A549 (cell line): ENCODE measurements at regions of chr20 and their contacts with region 1.

Region 1: GRCh38 chr20:40689943-40690835 is 1.2 kb upstream of the MAFB start:
- DNase-seq: peak; percentile 73 to 86
- ATAC-seq: peak; percentile 72 to 91
- H3K4me3 ChIP-seq: peak overlapping the region; percentile 48
- H3K27ac ChIP-seq: peak overlapping the region; percentile 35 to 76; a peak in 3 of 6 replicates
- H3K4me1 ChIP-seq: no peaks in the 10 kb centered on the region
- CTCF ChIP-seq: peak; percentile 79
- EP300 ChIP-seq: no peak
- POLR2A ChIP-seq: no peak
- RAD21 ChIP-seq: peak; percentile 73 to 89

Region 2: DNA sequence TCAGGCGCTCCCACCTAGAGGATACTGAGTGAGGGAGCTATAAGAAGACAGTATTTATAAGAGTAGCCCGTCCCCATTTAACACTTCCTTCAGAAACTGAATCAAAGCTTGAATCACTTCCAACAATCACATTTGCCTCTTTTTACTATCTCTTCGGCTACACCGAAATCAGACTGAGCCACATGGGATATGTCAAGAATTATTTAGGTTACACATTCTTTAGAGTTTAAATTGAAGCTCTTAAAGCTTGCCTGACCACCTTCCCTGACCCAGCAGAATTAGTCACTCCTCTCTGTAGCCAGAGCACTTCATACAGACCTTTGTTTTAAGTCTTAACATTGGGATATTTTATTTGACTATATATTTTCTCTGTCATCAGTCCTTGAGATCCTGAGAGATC is 164.8 kb before region 1 on chr20:
- CTCF ChIA-PET with region 1: no interaction called
- POLR2A ChIA-PET with region 1: no interaction called
- DNase-seq: no peak
- ATAC-seq: no peak
- H3K4me3 ChIP-seq: no peak overlapping the region
- H3K27ac ChIP-seq: no peak overlapping the region
- H3K4me1 ChIP-seq: no peaks in the 10 kb centered on the region
- CTCF ChIP-seq: no peak
- EP300 ChIP-seq: no peak
- POLR2A ChIP-seq: no peak
- RAD21 ChIP-seq: no peak

Region 3: DNA sequence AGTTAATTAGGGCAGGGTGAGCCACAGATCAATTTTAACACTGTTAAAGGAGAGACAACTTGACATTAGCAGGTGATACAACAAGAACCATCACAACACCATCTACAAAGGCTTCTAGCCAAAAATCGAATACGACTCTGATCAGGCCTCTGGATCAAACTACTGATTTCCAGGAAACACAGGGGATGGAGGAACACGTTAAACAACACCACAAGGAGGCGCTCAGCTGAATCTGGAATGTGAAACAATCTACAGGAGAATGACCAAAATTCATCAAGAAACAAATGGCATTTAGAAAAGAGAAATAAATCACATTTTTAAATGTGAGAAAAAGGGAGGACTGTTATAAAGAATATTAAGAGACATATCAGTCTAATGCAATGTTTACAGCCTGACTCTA is 12.3 kb after region 1 on chr20:
- CTCF ChIA-PET with region 1: interaction called, 17 read pairs
- POLR2A ChIA-PET with region 1: no interaction called
- DNase-seq: no peak
- ATAC-seq: no peak
- H3K4me3 ChIP-seq: no peak overlapping the region
- H3K27ac ChIP-seq: no peak overlapping the region
- H3K4me1 ChIP-seq: no peaks in the 10 kb centered on the region
- CTCF ChIP-seq: no peak
- EP300 ChIP-seq: no peak
- POLR2A ChIP-seq: no peak
- RAD21 ChIP-seq: no peak